ENCODE measurements at regions of chr13 and their contacts with region 1.

Region 1: DNA sequence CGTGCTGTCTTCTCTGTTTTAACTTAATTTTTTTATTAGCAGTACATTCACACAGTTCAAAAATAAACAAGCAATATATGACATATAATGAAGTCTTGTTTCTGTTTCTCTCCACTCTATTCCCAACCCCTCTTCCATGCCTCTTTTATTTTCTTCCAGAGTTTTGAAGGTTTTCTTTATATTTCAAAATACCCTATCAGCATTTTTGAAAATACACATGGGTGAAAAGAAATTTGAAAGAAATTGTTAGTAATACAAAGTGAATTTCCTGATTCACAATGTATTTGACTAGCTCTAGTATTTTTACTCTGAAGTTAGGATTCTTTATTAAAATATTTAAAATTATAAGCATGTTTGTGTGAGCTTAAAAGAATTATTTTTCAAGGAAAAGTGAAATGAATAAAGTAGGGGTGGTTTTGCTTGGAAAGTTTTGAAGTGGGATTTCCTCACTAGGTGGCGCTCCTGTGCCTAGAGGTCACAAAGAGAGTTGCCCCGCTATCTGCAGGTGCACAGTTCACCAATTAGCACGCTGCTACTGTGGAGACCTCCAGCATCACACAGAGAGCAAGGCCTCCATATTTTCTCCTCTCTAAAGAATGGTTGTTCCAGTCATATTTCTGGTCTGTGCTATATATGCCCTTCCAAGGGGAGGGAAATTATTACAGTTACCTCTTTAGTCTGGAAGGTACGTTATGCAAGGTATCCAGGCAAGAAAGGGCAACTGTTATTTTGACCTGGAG is 37.6 kb downstream of the SOX21 start:
- DNase-seq: peak; percentile 55
- H3K4me3 ChIP-seq: no peak overlapping the region
- H3K27ac ChIP-seq: no peak overlapping the region
- H3K4me1 ChIP-seq: no peaks in the 10 kb centered on the region
- CTCF ChIP-seq: peak; percentile 81

Region 2: DNA sequence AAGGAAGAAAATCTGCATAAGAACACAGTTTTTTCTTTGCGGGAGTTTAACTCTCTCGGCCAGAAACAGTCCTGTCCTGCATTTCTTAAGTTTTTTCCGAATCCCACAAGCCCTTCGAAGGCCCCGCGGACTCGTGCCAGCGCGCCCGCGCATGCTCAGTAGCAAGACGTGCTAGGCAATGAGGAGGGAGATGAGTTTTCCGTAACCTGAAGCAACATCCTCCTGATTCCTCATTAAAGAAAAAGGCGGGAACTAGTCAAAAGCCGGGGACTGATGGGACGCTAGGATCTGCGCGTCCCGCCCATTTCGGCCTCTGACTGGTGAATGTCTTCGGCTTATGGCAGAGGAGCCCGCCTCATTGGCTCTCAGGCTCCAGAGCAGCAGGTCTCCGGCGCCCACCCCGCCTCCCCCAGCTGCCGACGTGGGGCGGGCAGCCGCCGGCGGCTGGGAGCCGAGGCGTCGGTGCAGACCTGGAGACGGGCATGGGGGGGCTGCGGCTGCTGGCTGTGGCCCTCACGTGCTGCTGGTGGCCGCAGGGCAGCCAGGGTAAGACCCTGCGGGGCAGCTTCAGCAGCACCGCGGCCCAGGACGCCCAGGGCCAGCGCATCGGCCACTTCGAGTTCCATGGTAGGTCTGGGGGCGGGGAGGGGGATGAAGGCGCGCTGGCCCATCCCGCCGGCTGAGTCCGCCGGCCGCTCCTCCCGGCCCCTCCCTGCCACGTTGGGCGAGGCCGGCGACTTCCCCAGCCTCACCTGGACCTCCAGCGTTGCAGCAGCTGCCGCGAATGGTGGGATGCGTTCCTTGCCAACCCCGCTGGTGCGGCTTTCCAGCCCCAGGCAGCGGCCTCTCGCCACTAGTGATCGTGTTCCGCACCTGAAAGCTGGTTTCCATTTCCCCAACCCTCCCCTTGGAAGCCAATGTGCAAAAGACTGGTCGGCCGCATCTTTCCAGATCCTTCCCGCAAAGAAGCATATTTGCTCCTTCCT is 73.0 kb before region 1 on chr13 and contains the start of gene GPR180:
- CTCF ChIA-PET with region 1: no interaction called
- POLR2A ChIA-PET with region 1: no interaction called
- intact Hi-C with region 1: no loop called
- DNase-seq: peak; percentile 95
- H3K4me3 ChIP-seq: peak within 1 kb of the TSS; percentile 94
- H3K27ac ChIP-seq: peak within 1 kb of the TSS; percentile 35
- H3K4me1 ChIP-seq: peaks cover 11% of the 10 kb centered on the region
- CTCF ChIP-seq: no peak
- total RNA-seq, gene GPR180: 3.7 and 3.9 TPM in 2 replicates

Region 3: DNA sequence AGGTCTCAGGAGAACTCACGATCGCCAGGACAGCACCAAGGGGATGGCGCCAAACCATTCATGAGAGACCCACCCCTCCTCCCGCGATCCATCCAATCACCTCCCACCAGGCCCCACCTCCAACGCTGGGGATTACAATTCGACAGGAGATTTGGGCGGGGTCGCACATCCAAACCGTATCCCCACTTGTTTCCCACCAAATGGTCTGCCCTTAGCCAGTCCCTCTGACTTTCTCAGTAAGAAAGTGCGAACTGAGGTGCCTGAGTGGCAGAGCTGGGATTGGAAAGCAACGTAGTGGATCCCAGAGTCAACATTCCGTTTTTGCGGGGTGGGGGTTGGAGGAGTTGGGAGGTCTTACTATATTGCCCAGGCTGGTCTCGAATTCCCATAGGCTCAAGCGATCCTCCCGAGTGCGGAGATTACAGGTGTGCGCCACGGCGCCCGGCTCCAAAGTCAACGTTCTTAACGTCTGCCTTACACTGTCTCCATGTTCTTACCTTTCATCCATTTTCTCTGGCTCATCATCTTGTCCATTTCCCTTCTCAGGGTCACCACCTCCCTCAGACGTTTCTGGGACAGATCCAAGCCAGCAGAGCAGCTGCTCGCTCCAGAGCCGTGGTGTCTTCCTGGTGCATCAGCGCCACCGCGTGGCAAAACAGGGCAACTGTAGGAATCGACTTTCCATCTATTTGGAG is 729.2 kb after region 1 on chr13:
- CTCF ChIA-PET with region 1: no interaction called
- POLR2A ChIA-PET with region 1: no interaction called
- intact Hi-C with region 1: loop called (anchors 2 kb)
- DNase-seq: peak; percentile 63
- H3K4me3 ChIP-seq: no peak overlapping the region
- H3K27ac ChIP-seq: no peak overlapping the region
- H3K4me1 ChIP-seq: peaks cover 8% of the 10 kb centered on the region
- CTCF ChIP-seq: peak; percentile 82

Measured in OCI-LY7 (cell line).